K562 (cell line): ENCODE measurements at regions of chr3 and their contacts with region 1.

Region 1: DNA sequence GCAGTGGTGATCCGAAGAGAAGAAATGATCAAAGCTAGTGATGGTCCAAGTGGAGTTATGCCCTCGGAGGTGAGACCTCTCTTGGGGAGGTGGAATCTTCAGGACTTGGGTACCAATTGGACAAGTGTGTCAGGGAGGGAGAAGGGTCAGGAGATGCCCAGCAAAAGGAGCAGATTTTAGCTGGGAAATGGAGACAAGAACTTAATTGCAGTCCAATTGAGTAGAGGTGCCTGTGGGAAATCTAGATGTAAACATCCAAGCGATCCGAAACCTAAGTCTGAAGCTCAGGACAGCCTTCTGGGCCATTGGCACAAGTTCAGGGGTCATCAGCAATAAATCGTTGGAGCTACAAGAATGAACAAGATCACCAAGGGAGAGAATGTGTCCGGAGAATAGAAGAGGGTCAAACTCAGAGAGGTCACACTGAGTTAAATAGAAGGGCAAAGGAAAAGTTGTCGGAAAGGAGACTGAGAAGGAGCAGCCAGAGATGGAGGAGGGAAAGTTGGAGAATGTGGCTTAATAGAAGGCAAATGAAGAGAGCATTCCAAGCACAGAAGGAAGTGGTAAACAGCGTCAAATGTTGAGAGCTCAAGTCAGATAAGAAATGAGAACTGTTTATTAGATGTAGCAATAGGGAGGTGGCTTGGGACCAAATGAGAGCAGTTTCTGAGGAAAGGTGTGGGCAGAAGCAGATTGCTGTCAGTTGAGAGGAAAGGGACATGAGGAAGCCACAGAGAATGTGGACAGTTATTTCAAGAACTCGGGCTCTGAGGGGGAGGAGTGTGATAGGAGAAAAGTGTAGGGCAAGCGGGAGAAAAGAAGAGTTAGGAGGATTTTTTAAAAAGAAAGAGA is 64.2 kb upstream of the FNDC3B start:
- DNase-seq: peak in 2 of 4 experiments; percentile 39 to 64
- ATAC-seq: peak; percentile 31
- H3K4me3 ChIP-seq: no peak overlapping the region
- H3K27ac ChIP-seq: peak overlapping the region; percentile 49; the same call in 2 of the 3 replicates
- H3K4me1 ChIP-seq: peaks cover 0 to 54% of the 10 kb centered on the region in 2 experiments; a peak in 3 of 5 replicates
- H3K27me3 ChIP-seq: no peaks in the 10 kb centered on the region
- CTCF ChIP-seq: no peak
- EP300 ChIP-seq: peak; percentile 82
- POLR2A ChIP-seq: no peak
- RAD21 ChIP-seq: peak in 1 of 2 experiments; percentile 19; a peak in 2 of 4 replicates

Region 2: GRCh38 chr3:172029425-172030098 is 54.4 kb after region 1 on chr3:
- CTCF ChIA-PET with region 1: no interaction called
- POLR2A ChIA-PET with region 1: no interaction called
- in situ Hi-C with region 1: loop called (anchors 5 kb)
- intact Hi-C with region 1: no loop called
- DNase-seq: peak in 1 of 4 experiments; percentile 24
- ATAC-seq: peak; percentile 62
- H3K4me3 ChIP-seq: no peak overlapping the region
- H3K27ac ChIP-seq: no peak overlapping the region
- H3K4me1 ChIP-seq: peaks cover 0 to 14% of the 10 kb centered on the region in 2 experiments; a peak in 3 of 5 replicates
- H3K27me3 ChIP-seq: no peaks in the 10 kb centered on the region
- CTCF ChIP-seq: no peak
- EP300 ChIP-seq: peak; percentile 42; the same call in 1 of the 2 replicates
- POLR2A ChIP-seq: no peak
- RAD21 ChIP-seq: no peak